Gastrocnemius medialis (tissue), 4 donors: ENCODE measurements at regions of chr11 and their contacts with region 1.

Region 1: DNA sequence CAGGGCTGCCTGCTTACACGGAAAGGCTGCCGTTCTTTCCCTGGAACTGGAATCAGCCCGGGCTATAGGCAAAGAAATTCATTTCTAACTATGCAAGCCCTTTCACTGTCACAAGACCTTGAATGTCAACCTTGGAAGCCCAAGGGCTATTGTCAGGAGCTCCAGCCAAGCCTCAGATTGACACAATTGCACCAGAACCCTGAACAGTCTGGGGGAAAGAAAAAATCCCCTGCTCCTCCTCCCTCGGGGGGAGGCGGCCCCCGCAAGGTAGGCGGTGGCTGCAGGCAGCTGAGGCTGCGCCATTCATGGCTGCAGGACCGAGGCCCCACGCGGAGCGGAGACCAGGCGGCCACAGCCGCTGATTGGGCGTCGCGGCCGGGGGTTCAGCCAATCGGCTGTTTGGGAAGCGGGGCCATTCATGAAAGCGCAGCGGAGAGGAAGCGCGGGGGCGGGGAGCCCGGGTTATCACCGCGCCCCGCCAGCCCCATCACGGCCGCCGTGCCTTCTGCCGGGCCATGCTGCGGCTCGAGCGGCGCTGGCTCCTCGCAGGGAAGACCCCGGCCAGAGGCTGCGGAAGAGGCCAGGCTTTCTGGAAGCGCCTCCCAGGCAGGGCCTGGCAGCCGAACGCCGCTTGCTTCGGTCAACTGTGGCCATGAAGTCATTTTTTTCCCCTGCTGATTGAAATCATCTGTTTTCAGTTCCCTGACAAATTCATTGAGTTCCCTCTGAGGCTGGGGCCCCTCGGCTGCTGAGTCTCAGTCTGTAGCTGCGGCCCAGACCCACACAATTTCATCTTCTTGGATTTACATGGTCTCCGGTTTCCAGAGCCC is 38.1 kb upstream of the LINC01488 start:
- DNase-seq: peak; percentile 62 to 65
- ATAC-seq: peak; percentile 67 to 68
- H3K4me3 ChIP-seq: peak overlapping the region; percentile 34 to 54 (median 45)
- H3K27ac ChIP-seq: peak overlapping the region; percentile 49 to 73 (median 63)
- H3K4me1 ChIP-seq: peaks cover 21 to 24% of the 10 kb centered on the region in 2 donors
- H3K27me3 ChIP-seq: no peaks in the 10 kb centered on the region
- CTCF ChIP-seq: no peak
- POLR2A ChIP-seq: no peak

Region 2: DNA sequence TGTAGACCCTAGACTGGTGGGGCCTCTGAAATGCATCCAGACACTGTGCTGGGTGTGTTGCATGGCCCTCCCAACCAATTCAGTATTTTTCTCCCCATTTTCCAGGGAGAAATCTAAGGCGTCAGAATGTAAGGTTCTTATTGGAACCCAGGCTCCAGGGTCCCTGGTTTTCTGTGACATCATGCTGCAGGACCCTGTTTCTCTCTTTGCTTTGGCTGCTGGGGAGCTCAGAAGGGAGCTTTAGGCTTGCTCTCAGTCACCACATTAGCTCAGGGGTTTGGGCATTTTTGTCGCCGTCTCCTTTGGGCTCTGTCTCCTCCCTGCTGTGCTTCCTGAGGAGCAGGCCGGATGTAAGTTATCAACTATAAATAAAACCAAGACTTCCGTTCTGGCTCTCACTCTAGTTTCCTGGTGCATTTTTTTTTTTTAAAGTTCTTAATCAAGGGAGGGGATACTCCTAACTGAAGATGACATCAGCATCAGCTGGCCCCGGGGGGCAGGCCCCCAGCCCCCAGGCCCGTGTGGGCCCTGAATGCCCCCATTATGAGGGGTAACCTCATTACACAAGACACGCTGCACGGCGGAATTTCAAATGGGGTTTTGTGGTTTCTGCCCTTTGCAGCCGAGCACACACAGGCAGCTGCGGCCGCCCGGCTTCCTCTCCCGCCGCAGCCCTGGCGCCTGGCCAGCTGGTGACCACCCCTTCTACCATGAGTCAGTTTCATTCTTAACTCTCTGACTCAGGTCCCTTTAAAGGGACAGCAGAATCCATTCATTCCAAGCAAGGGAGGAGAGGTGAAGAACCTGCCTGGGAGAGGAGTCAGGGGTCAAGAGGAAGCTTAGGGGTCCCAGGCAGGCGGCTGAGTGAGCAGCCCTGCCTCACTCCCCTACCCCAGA is 146.2 kb before region 1 on chr11:
- in situ Hi-C with region 1: no loop called
- intact Hi-C with region 1: loop called (anchors 10 kb)
- DNase-seq: peak; percentile 61 to 78
- ATAC-seq: peak; percentile 77 to 79
- H3K4me3 ChIP-seq: peak overlapping the region; percentile 1 to 30 (median 14)
- H3K27ac ChIP-seq: peak overlapping the region; percentile 54 to 63 (median 59)
- H3K4me1 ChIP-seq: peaks cover 19% of the 10 kb centered on the region in 2 donors
- H3K27me3 ChIP-seq: no peaks in the 10 kb centered on the region
- CTCF ChIP-seq: no peak
- POLR2A ChIP-seq: no peak

Region 3: GRCh38 chr11:69497221-69497787 is 54.0 kb after region 1 on chr11:
- in situ Hi-C with region 1: no loop called
- intact Hi-C with region 1: no loop called
- DNase-seq: peak; percentile 9 to 41
- ATAC-seq: peak; percentile 82 to 84
- H3K4me3 ChIP-seq: peak overlapping the region in 1 of 4 donors; percentile 17
- H3K27ac ChIP-seq: no peak overlapping the region
- H3K4me1 ChIP-seq: peaks cover 14 to 23% of the 10 kb centered on the region in 2 donors
- H3K27me3 ChIP-seq: no peaks in the 10 kb centered on the region
- CTCF ChIP-seq: no peak
- POLR2A ChIP-seq: no peak